SK-N-SH (cell line): ENCODE measurements at regions of chr5 and their contacts with region 1.

Region 1: GRCh38 chr5:80092486-80093107 is 57.4 kb downstream of the THBS4 start:
- DNase-seq: no peak
- H3K4me3 ChIP-seq: no peak overlapping the region
- H3K27ac ChIP-seq: no peak overlapping the region
- H3K4me1 ChIP-seq: no peaks in the 10 kb centered on the region
- H3K27me3 ChIP-seq: no peaks in the 10 kb centered on the region
- CTCF ChIP-seq: no peak
- EP300 ChIP-seq: no peak
- RAD21 ChIP-seq: no peak

Region 2: GRCh38 chr5:79974891-79975290 is 117.7 kb before region 1 on chr5:
- CTCF ChIA-PET with region 1: no interaction called
- POLR2A ChIA-PET with region 1: no interaction called
- DNase-seq: no peak
- H3K4me3 ChIP-seq: no peak overlapping the region
- H3K27ac ChIP-seq: peak overlapping the region; percentile 55 to 71; a peak in 3 of 4 replicates
- H3K4me1 ChIP-seq: peaks cover 0 to 9% of the 10 kb centered on the region in 2 experiments; a peak in 3 of 4 replicates
- H3K27me3 ChIP-seq: no peaks in the 10 kb centered on the region
- CTCF ChIP-seq: no peak
- EP300 ChIP-seq: no peak
- RAD21 ChIP-seq: no peak

Region 3: DNA sequence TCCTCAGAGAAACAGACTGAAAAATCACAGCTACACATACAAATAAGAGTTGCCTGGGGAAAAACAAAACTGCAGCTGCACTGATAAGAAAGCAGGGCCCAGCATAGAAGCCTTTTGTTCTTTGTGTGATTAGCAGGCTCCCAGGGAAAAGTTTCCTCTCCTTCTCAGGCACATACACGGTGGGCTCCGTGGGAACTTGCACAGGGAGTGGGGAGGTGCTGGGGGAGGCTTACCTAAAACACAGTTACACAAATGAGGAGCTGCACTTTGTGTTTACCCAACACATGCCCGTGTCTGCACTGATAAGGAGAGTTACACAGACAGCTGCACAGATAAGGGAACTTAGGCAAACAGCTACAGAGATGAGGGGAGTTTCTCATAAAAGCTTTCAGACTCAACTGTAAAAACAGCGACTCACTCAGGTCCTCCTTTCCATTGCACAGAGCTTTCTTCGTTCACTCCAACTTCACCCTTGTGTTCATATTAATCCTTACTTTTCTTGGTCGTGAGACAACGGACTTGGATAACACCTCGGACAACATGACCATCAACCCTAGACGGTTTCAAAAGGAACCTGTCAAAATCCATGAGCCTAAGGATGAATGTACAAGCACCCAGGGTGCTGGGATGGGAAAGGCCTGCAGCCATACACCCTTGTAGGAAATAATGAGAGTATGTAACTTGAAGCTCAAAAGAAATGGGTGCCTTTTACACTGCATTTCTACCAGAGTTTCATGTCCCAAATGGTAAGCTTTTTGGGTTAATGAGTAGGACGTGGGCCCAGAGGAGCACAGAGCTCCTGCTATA is 112.4 kb after region 1 on chr5:
- CTCF ChIA-PET with region 1: interaction called, 20 read pairs
- POLR2A ChIA-PET with region 1: interaction called, 12 read pairs
- DNase-seq: peak; percentile 58
- H3K4me3 ChIP-seq: no peak overlapping the region
- H3K27ac ChIP-seq: peak overlapping the region in 1 of 2 experiments; percentile 99; a peak in 2 of 4 replicates
- H3K4me1 ChIP-seq: peaks cover 0 to 25% of the 10 kb centered on the region in 2 experiments; a peak in 2 of 4 replicates
- H3K27me3 ChIP-seq: no peaks in the 10 kb centered on the region
- CTCF ChIP-seq: no peak
- EP300 ChIP-seq: peak in 1 of 2 experiments; percentile 75; a peak in 2 of 4 replicates
- RAD21 ChIP-seq: peak; percentile 60

Region 4: GRCh38 chr5:80255732-80256479 is 163.3 kb after region 1 on chr5 and contains the start of gene SERINC5:
- CTCF ChIA-PET with region 1: interaction called, 32 read pairs
- POLR2A ChIA-PET with region 1: interaction called, 4 read pairs
- DNase-seq: peak; percentile 97
- H3K4me3 ChIP-seq: peak within 1 kb of the TSS; percentile 79 to 94
- H3K27ac ChIP-seq: peak within 1 kb of the TSS; percentile 84 to 90
- H3K4me1 ChIP-seq: peaks cover 11 to 12% of the 10 kb centered on the region in 2 experiments
- H3K27me3 ChIP-seq: no peaks in the 10 kb centered on the region
- CTCF ChIP-seq: no peak
- EP300 ChIP-seq: no peak
- RAD21 ChIP-seq: no peak
- polyA plus RNA-seq, gene SERINC5: 4.5 and 7.4 TPM in 2 replicates

Region 5: GRCh38 chr5:80275347-80275746 is 182.8 kb after region 1 on chr5:
- CTCF ChIA-PET with region 1: interaction called, 35 read pairs
- POLR2A ChIA-PET with region 1: no interaction called
- DNase-seq: peak; percentile 47
- H3K4me3 ChIP-seq: no peak overlapping the region
- H3K27ac ChIP-seq: no peak overlapping the region
- H3K4me1 ChIP-seq: no peaks in the 10 kb centered on the region
- H3K27me3 ChIP-seq: no peaks in the 10 kb centered on the region
- CTCF ChIP-seq: peak; percentile 53
- EP300 ChIP-seq: no peak
- RAD21 ChIP-seq: peak; percentile 86

Region 6: DNA sequence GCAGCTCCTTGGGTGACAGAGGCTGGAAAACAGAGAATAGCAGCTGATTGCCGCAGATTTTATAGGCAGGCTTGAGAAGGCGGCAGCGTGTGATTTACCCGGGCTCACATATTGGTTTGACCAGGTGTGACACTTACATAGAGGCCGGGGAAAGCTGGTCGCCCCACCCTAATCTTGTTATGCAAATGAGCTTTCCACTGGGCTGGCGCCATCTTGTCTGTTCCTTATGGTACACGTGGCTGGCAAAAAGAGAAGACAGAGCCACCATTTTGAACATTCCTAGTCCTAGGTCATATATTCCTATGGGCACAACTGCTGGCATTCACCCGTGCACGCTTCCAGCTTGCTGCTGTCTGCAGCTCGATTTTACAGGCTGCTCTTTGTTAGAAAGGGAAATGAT is 215.9 kb after region 1 on chr5:
- CTCF ChIA-PET with region 1: interaction called, 104 read pairs
- POLR2A ChIA-PET with region 1: no interaction called
- DNase-seq: no peak
- H3K4me3 ChIP-seq: no peak overlapping the region
- H3K27ac ChIP-seq: no peak overlapping the region
- H3K4me1 ChIP-seq: no peaks in the 10 kb centered on the region
- H3K27me3 ChIP-seq: no peaks in the 10 kb centered on the region
- CTCF ChIP-seq: no peak
- EP300 ChIP-seq: no peak
- RAD21 ChIP-seq: no peak